CD14-positive monocyte (primary cell): ENCODE measurements at regions of chr9 and their contacts with region 1.

Region 1: DNA sequence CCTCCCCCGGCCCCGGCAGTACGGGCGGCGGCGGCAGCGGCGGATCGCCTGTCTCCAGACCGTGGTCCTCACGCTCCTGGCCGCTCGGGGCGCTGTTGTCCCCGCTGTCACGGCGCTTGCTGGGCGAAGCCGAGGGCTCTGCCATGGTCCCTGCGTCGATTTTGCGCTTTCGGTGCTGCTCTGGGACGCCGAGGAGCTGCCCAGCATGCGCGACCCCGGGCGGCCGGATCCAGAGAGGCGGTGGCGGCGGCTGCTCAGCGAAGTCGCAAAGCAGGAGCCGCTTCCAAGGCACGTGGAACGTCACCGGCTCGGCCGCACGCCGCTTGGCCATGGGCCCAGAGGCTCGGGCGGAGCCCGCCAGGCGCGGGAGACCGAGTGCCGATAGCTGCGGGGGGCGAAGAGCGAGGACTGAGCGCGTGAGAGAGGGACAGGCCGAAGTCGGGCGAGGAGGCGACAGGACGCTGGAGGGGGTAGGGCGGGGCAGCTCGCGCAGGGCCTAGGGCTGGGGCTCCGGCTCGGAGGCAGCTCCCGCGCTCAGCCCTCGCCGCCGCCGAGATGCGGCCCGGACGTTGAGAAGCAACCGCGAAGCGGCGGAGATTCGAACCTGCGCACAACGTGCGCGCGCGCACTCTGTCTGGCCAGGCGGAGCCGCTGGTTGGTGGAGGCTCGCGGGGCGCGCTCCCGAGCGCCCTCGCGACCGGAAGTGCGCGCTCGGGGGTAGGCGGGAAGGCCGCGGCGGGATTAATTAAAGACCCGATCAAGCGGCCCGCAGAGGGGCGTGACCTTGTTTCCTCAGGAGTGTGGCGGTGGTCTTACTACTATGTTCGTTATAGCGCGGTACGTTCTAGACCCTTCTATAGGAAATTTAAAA is at the start of gene C9orf40:
- DNase-seq: peak; percentile 79 to 84 (median 83)
- H3K4me3 ChIP-seq: peak within 1 kb of the TSS; percentile 78 to 91 (median 81)
- H3K4me3 Mint-ChIP-seq: peak within 1 kb of the TSS; percentile 98 to 99
- H3K27ac ChIP-seq: peak within 1 kb of the TSS; percentile 46 to 93
- H3K27ac Mint-ChIP-seq: peak within 1 kb of the TSS; percentile 76 to 96 (median 85)
- H3K4me1 ChIP-seq: peaks cover 9 to 17% of the 10 kb centered on the region in 2 donors
- H3K4me1 Mint-ChIP-seq: peaks cover 23% of the 10 kb centered on the region
- H3K27me3 ChIP-seq: no peaks in the 10 kb centered on the region
- H3K27me3 Mint-ChIP-seq: peaks cover 0 to 3% (median 2%) of the 10 kb centered on the region in 3 donors
- CTCF ChIP-seq: peak; percentile 91
- polyA plus RNA-seq, gene C9orf40: 0.44 to 1.1 (median 0.47) TPM

Region 2: GRCh38 chr9:75013735-75014134 is 61.2 kb after region 1 on chr9:
- intact Hi-C with region 1: no loop called
- DNase-seq: no peak
- H3K4me3 ChIP-seq: no peak overlapping the region
- H3K4me3 Mint-ChIP-seq: no peak overlapping the region
- H3K27ac ChIP-seq: no peak overlapping the region
- H3K27ac Mint-ChIP-seq: peak overlapping the region in 1 of 7 donors; percentile 66
- H3K4me1 ChIP-seq: no peaks in the 10 kb centered on the region
- H3K4me1 Mint-ChIP-seq: no peaks in the 10 kb centered on the region
- H3K27me3 ChIP-seq: no peaks in the 10 kb centered on the region
- H3K27me3 Mint-ChIP-seq: peaks cover 0 to 2% (median 0%) of the 10 kb centered on the region in 3 donors
- CTCF ChIP-seq: no peak

Region 3: GRCh38 chr9:75083188-75083970 is 130.9 kb after region 1 on chr9:
- intact Hi-C with region 1: loop called in 1 of 2 experiments (anchors 5 kb)
- DNase-seq: no peak
- H3K4me3 ChIP-seq: no peak overlapping the region
- H3K4me3 Mint-ChIP-seq: no peak overlapping the region
- H3K27ac ChIP-seq: no peak overlapping the region
- H3K27ac Mint-ChIP-seq: no peak overlapping the region
- H3K4me1 ChIP-seq: peaks cover 11 to 24% of the 10 kb centered on the region in 2 donors
- H3K4me1 Mint-ChIP-seq: peaks cover 15% of the 10 kb centered on the region
- H3K27me3 ChIP-seq: no peaks in the 10 kb centered on the region
- H3K27me3 Mint-ChIP-seq: no peaks in the 10 kb centered on the region
- CTCF ChIP-seq: no peak